IMR-90 (cell line): ENCODE measurements at regions of chr20 and their contacts with region 1.

Region 1: GRCh38 chr20:49610701-49611538 is 43.0 kb upstream of the PTGIS start:
- DNase-seq: no peak
- ATAC-seq: peak; percentile 92
- H3K4me3 ChIP-seq: no peak overlapping the region
- H3K27ac ChIP-seq: no peak overlapping the region
- H3K4me1 ChIP-seq: peaks cover 4% of the 10 kb centered on the region; the same call in 1 of the 2 replicates
- H3K27me3 ChIP-seq: peaks cover 6% of the 10 kb centered on the region; the same call in 1 of the 2 replicates
- CTCF ChIP-seq: peak; percentile 98
- POLR2A ChIP-seq: 0 out of 2 replicates have a peak, but pooled peaks have one; percentile 21
- RAD21 ChIP-seq: peak; percentile 95

Region 2: DNA sequence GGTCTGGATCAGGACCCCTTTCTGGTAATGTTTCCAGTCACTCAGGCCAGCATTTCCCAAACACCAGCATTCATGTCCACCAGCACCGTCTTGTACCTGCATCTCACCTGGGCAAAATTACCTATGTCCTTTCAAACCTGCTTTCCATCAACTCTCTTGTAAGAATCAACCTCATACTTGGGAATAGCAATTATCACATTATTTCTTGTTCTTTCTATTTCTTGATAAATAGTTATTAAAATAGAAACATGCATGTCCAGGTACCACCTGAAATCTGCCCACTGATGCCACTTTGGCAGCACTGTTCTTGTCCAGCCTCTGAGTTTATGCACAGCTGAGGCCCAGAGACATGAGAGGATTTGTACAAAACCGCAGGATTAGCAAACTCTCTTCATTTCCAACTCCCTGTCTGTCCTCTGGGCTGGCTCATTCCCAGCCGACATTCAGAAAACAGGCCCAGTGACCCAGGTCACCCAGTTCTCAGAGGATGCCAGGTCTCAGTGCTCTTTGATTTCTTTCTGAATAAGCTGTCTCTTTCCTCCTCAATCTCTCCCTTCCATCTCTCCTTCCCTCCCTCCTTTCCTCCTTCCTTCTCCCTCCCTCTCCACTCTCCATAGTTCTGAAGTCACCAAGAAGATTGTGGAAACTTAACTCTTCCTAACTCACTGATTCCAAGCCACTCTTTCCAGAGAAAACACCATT is 1453.1 kb before region 1 on chr20:
- CTCF ChIA-PET with region 1: no interaction called
- POLR2A ChIA-PET with region 1: no interaction called
- dilution Hi-C with region 1: no loop called
- in situ Hi-C with region 1: no loop called
- intact Hi-C with region 1: no loop called
- DNase-seq: no peak
- ATAC-seq: no peak
- H3K4me3 ChIP-seq: no peak overlapping the region
- H3K27ac ChIP-seq: no peak overlapping the region
- H3K4me1 ChIP-seq: no peaks in the 10 kb centered on the region
- H3K27me3 ChIP-seq: no peaks in the 10 kb centered on the region; the same call in 1 of the 2 replicates
- CTCF ChIP-seq: no peak
- POLR2A ChIP-seq: no peak
- RAD21 ChIP-seq: no peak

Region 3: DNA sequence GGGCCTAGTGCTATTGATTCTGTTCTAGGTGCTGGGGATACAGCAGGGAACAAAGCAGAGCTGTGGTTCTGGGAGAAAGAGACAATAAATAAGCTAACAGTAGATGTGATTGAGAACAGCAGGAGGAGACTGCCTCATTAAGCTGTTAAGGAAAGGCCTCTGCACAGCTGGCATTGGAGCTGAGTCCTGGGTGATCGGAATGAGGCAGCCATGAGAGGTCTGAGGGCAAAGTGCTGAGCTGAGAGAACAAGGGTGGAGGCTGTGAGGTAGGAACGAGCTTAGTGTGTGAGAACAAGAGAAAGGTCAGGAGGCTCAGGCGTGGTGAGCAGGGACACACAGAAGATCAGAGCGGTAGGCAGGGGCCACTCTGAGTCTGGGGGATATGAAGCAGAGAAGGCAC is 373.4 kb before region 1 on chr20:
- CTCF ChIA-PET with region 1: no interaction called
- POLR2A ChIA-PET with region 1: no interaction called
- dilution Hi-C with region 1: no loop called
- in situ Hi-C with region 1: no loop called
- intact Hi-C with region 1: no loop called
- DNase-seq: no peak
- ATAC-seq: no peak
- H3K4me3 ChIP-seq: no peak overlapping the region
- H3K27ac ChIP-seq: no peak overlapping the region
- H3K4me1 ChIP-seq: no peaks in the 10 kb centered on the region
- H3K27me3 ChIP-seq: no peaks in the 10 kb centered on the region
- CTCF ChIP-seq: no peak
- POLR2A ChIP-seq: no peak
- RAD21 ChIP-seq: no peak

Region 4: GRCh38 chr20:49338061-49338460 is 272.9 kb before region 1 on chr20:
- CTCF ChIA-PET with region 1: no interaction called
- POLR2A ChIA-PET with region 1: no interaction called
- dilution Hi-C with region 1: no loop called
- in situ Hi-C with region 1: loop called (anchors 5 kb)
- intact Hi-C with region 1: loop called (anchors 1 kb)
- DNase-seq: no peak
- ATAC-seq: no peak
- H3K4me3 ChIP-seq: no peak overlapping the region
- H3K27ac ChIP-seq: no peak overlapping the region
- H3K4me1 ChIP-seq: peaks cover 2% of the 10 kb centered on the region; the same call in 1 of the 2 replicates
- H3K27me3 ChIP-seq: peaks cover 16% of the 10 kb centered on the region
- CTCF ChIP-seq: no peak
- POLR2A ChIP-seq: no peak
- RAD21 ChIP-seq: no peak

Region 5: DNA sequence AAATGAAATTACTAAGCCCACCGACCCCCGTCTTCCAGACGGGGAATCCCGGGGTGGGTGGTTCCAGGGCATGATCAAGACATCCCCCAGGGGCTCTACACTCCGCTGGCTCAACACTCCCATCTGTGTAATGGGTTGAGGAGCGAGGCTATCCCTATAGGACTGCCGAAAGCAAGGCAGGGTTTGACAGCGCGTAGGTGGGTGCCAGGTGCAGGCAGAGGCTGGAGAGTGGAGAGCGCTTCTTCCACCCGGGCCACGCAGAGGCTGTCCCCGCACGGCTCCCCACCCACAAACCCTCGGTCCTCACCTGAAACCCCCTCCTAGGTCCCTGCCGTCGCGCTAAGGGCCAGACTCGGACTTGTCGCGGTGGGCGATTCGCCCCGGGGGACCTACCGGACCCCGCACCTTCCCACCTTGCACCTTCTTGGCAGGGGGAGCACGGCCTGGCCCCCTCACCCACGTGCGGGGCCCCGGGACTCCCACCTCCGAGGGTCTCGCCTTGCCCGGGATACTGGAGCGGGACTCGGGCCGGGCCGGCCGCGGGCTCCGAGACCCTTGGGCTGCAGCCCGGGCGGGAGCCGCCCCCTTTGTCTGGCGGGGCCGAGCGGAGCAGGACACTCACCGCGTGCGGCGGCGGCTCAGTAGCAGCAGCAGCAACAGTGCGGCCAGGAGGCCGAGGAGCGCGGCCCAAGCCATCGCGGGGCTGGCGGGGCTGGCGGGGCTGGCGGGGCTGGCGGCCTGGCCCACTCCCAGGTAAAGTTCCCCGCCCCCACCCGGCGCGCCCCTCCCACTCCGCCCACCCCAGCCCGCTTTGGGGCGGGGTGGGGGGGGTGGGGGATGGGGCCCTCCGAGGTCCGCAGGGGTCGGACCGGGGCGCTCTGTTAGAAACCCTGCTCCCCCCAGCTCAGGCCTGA is 43.2 kb before region 1 on chr20 and contains the start of gene PTGIS:
- CTCF ChIA-PET with region 1: no interaction called
- POLR2A ChIA-PET with region 1: no interaction called
- dilution Hi-C with region 1: no loop called
- in situ Hi-C with region 1: no loop called
- intact Hi-C with region 1: no loop called
- DNase-seq: no peak
- ATAC-seq: peak; percentile 79
- H3K4me3 ChIP-seq: peak within 1 kb of the TSS; percentile 46
- H3K27ac ChIP-seq: peak within 1 kb of the TSS; percentile 37
- H3K4me1 ChIP-seq: peaks cover 18% of the 10 kb centered on the region; the same call in 1 of the 2 replicates
- H3K27me3 ChIP-seq: peaks cover 21% of the 10 kb centered on the region
- CTCF ChIP-seq: no peak
- POLR2A ChIP-seq: no peak
- RAD21 ChIP-seq: no peak
- total RNA-seq, gene PTGIS: 1.1 and 1.6 TPM in 2 replicates

Region 6: DNA sequence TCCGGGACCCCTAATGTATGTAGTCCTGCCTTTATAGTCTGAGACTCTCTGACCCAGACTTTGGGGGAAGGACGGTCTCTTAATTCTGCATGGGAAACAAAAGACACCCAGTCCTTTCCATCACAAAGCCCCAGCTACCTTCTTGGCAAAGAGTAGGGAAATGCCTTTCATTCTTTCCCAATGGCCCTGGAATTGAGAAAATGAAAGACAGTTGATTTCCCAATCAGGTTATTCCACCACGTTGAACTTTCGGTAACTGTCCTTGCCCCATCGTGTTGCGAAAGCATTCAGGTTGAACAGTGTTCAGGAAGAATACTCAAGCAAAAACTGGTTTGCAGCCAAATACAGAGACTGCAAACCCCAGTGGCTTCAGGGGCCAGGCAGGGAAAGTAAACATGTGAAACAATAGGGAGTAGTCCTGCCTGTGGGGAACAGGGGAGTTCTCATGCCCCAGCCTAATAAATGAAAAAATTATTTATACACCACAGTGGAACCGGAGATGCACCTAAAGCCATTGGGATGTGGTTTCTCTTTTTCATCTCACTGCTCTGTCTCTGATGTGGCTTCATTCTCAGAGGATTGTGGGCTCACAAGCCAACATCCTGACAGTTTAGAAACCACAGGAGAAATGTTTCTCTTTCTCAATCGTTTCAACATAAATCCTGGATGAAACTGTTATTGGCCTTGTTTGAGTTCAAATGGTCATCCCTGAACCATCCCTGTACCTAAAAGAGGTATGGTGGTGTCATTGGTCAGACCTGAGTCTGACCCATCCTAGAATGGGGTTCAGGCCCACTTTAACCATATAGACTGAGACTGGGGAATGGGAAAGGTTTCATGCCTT is 157.5 kb after region 1 on chr20:
- CTCF ChIA-PET with region 1: no interaction called
- POLR2A ChIA-PET with region 1: no interaction called
- dilution Hi-C with region 1: no loop called
- in situ Hi-C with region 1: no loop called
- intact Hi-C with region 1: no loop called
- DNase-seq: peak; percentile 70
- ATAC-seq: peak; percentile 66
- H3K4me3 ChIP-seq: no peak overlapping the region
- H3K27ac ChIP-seq: peak overlapping the region; percentile 79; the same call in 1 of the 2 replicates
- H3K4me1 ChIP-seq: peaks cover 9% of the 10 kb centered on the region
- H3K27me3 ChIP-seq: no peaks in the 10 kb centered on the region
- CTCF ChIP-seq: no peak
- POLR2A ChIP-seq: no peak
- RAD21 ChIP-seq: no peak

Region 7: DNA sequence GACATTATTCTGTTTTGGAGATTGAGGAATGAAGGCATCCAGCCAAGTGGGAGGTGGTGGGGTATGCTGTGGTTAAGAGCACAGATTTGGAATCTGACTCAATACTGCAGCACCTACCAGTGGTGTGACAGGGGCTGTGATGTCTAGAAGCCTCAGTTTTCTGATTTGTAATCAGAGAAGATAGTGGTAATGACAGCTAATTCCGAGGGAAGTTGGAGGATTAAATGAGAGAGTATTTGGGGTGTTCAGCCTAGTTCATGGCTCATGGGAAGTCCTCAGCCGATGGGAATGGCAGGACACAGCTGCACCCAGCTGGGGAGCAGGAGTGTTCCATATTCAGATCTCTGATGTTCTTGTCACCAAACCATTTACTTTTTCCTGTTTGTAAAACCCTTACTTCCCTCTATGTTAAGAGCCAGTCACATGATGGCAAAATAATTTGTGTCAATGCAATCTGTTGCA is 211.0 kb after region 1 on chr20:
- CTCF ChIA-PET with region 1: no interaction called
- POLR2A ChIA-PET with region 1: no interaction called
- dilution Hi-C with region 1: no loop called
- in situ Hi-C with region 1: no loop called
- intact Hi-C with region 1: loop called (anchors 1 kb)
- DNase-seq: peak; percentile 71
- ATAC-seq: peak; percentile 87
- H3K4me3 ChIP-seq: no peak overlapping the region
- H3K27ac ChIP-seq: no peak overlapping the region
- H3K4me1 ChIP-seq: peaks cover 11% of the 10 kb centered on the region
- H3K27me3 ChIP-seq: no peaks in the 10 kb centered on the region
- CTCF ChIP-seq: peak; percentile 42; the same call in 1 of the 2 replicates
- POLR2A ChIP-seq: no peak
- RAD21 ChIP-seq: peak; percentile 57

Region 8: DNA sequence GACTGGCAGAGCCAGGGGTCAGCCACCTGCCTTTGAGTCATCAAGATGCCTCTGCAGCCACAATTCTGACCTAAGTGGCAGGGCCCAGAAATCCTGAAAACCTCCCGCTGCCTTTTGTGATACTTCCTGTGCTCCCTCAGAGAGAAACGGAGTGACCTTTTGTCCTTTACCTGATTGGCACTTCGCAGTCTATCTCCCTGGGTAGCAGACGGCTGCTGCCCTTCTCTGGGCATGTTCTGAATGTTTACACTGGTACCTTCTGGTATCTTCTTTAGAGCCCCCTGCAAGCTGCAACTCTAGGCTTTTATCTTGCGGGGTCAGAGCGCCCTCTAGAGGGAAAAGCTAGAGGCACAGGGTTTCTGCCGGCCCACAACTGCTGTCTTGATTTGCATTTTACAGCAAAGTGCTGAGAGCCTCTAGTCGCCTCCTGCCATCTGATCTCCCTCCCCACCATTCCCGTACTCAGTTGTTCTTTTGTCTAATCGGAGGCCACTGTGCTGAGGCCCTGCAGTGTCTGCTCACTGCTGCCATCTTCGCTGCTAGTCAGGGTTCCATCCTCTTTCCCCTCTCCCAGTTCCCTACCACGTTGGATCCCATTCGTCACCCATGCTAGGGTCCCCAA is 277.5 kb after region 1 on chr20:
- CTCF ChIA-PET with region 1: no interaction called
- POLR2A ChIA-PET with region 1: no interaction called
- dilution Hi-C with region 1: no loop called
- in situ Hi-C with region 1: no loop called
- intact Hi-C with region 1: loop called (anchors 1 kb)
- DNase-seq: peak; percentile 56
- ATAC-seq: peak; percentile 77
- H3K4me3 ChIP-seq: no peak overlapping the region
- H3K27ac ChIP-seq: no peak overlapping the region
- H3K4me1 ChIP-seq: peaks cover 26% of the 10 kb centered on the region; the same call in 1 of the 2 replicates
- H3K27me3 ChIP-seq: no peaks in the 10 kb centered on the region
- CTCF ChIP-seq: peak; percentile 83
- POLR2A ChIP-seq: no peak
- RAD21 ChIP-seq: peak; percentile 79

Region 9: DNA sequence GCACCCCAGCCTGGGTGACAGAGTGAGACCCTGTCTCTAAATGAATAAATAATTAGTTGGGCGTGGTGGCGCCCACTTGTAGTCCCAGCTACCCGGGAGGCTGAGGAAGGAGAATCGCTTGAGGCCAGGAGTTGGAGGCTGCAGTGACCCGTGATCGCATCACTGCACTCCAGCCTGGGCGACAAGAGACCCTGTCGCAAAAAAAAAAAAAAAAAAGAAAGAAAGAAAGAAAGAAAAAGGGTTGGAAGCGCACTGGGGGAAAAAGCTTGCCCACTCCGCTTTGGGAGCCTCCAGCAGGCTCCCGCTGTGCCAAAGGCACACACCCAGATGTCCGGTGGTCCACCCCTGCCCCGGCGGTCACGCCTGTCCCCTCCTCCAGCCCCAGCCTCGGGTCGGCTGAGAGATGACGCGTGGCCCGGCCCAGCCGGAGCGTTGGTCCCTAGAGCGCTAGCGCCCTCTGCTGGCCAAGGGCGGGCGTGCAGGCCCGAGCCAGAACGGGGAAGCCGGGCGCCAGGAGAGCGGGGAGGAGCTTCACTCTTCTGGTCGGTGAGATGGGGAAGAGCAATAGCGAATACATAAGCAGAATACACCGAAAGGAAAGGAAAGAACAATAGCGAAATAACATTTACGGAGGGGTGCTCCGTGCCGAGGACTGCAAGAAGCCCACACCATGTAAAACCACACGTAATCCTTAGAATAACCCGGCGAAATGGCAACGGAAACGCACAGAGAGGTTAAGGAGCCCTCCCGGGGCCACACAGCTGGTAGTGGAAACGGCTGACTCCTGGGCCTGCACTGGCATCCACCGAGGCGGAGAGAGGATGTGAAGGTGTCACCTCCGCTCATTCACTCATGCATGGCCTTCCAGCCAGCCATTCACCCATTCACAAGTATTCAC is 460.3 kb after region 1 on chr20:
- CTCF ChIA-PET with region 1: no interaction called
- POLR2A ChIA-PET with region 1: no interaction called
- dilution Hi-C with region 1: no loop called
- in situ Hi-C with region 1: loop called (anchors 25 kb)
- intact Hi-C with region 1: loop called (anchors 10 kb)
- DNase-seq: peak; percentile 63
- ATAC-seq: peak; percentile 97
- H3K4me3 ChIP-seq: peak overlapping the region; percentile 45
- H3K27ac ChIP-seq: peak overlapping the region; percentile 36; the same call in 1 of the 2 replicates
- H3K4me1 ChIP-seq: peaks cover 7% of the 10 kb centered on the region
- H3K27me3 ChIP-seq: no peaks in the 10 kb centered on the region
- CTCF ChIP-seq: peak; percentile 99
- POLR2A ChIP-seq: peak; percentile 68
- RAD21 ChIP-seq: peak; percentile 100